ENCODE measurements at regions of chr2 and their contacts with region 1.

Region 1: GRCh38 chr2:219695145-219695709 is 67.8 kb downstream of the SLC4A3 start:
- DNase-seq: no peak

Region 2: DNA sequence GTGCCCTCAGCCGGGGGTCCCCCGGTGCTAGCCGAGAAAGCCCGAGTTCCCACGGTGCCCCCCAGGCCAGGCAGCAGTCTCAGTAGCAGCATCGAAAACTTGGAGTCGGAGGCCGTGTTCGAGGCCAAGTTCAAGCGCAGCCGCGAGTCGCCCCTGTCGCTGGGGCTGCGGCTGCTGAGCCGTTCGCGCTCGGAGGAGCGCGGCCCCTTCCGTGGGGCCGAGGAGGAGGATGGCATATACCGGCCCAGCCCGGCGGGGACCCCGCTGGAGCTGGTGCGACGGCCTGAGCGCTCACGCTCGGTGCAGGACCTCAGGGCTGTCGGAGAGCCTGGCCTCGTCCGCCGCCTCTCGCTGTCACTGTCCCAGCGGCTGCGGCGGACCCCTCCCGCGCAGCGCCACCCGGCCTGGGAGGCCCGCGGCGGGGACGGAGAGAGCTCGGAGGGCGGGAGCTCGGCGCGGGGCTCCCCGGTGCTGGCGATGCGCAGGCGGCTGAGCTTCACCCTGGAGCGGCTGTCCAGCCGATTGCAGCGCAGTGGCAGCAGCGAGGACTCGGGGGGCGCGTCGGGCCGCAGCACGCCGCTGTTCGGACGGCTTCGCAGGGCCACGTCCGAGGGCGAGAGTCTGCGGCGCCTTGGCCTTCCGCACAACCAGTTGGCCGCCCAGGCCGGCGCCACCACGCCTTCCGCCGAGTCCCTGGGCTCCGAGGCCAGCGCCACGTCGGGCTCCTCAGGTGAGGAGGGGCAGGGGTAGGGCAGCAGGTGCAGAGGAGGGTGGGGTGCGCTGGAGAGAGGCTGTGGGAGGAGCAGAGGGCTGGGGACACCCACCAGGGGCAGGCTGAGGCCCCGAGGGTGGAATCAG is 210.7 kb before region 1 on chr2:
- CTCF ChIA-PET with region 1: no interaction called
- POLR2A ChIA-PET with region 1: no interaction called
- DNase-seq: no peak

Region 3: DNA sequence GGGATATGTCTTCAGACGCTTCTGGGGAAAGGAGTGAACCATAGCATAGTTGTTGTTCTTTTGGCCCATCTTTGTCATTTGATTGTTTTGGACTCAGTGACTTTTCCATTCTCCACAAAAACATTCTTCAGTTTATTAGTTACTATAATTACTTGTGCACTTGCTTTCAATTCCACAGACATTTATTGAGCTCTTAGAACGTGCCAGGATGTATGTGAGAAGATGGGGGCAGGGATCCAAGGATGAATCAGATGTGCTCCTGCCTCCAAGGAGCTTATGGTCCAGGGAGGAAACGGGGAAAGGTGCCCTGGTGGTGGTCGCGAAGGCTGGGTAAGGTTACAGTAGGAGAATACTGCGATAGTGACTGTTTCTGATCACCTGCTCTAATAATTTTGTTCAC is 74.7 kb before region 1 on chr2:
- CTCF ChIA-PET with region 1: interaction called, 10 read pairs
- POLR2A ChIA-PET with region 1: no interaction called
- DNase-seq: no peak